AG04449 (cell line): ENCODE measurements at regions of chr19 and their contacts with region 1.

Region 1: GRCh38 chr19:5690125-5690954 is at the start of gene RPL36:
- DNase-seq: peak; percentile 57
- H3K4me3 ChIP-seq: peak within 1 kb of the TSS; percentile 98
- CTCF ChIP-seq: peak; percentile 99

Region 2: GRCh38 chr19:4776436-4777205 is 913.7 kb before region 1 on chr19:
- CTCF ChIA-PET with region 1: no interaction called
- POLR2A ChIA-PET with region 1: no interaction called
- DNase-seq: no peak
- H3K4me3 ChIP-seq: no peak overlapping the region
- CTCF ChIP-seq: no peak

Region 3: DNA sequence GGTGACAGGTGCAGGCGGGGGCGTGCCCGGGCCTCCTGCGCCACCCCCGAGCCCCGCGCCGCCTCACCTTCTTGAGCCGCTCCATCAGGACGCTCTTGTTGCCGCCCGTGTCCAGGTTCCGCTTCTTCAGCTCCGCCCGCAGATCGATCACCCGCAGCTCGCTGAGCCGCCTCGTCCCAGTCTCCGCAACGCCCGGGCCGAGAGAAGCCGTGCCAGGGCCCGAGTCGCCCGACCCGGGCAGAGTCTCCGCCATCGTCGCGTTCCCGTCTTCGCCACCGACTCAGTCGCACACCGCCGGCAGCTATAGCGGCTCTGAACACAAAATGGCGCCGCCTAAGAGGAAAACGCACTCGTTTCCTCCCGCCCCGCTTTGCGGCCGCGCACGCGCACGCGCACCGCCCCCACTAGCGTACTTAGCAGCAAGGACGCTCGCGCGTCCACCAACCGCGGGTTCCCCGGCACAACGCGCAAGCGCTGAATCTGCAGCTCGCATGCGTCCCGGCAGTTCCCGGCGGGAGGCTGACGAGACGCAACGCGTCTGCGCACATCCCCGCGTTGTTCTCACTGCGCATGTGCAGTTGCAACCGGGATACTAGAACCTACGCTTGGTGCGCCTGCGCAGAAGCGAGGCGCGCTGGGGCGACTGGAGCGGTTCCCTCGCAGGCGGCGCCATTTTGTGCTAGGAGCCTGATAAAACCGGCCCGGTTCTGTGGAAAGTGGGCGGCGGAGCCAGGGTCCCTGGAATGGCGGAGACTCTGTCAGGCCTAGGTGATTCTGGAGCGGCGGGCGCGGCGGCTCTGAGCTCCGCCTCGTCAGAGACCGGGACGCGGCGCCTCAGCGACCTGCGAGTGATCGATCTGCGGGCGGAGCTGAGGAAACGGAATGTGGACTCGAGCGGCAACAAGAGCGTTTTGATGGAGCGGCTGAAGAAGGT is 67.6 kb before region 1 on chr19 and contains the starts of genes SAFB and SAFB2:
- CTCF ChIA-PET with region 1: interaction called, 13 read pairs
- POLR2A ChIA-PET with region 1: interaction called, 7 read pairs
- DNase-seq: peak; percentile 95
- H3K4me3 ChIP-seq: peak within 1 kb of the TSS; percentile 96
- CTCF ChIP-seq: no peak

Region 4: GRCh38 chr19:5707576-5708575 is 17.5 kb after region 1 on chr19:
- CTCF ChIA-PET with region 1: interaction called, 58 read pairs
- POLR2A ChIA-PET with region 1: interaction called, 3 read pairs
- DNase-seq: no peak
- H3K4me3 ChIP-seq: no peak overlapping the region
- CTCF ChIP-seq: no peak

Region 5: GRCh38 chr19:5719274-5719960 is 29.1 kb after region 1 on chr19:
- CTCF ChIA-PET with region 1: interaction called, 58 read pairs
- POLR2A ChIA-PET with region 1: interaction called, 19 read pairs
- DNase-seq: no peak
- H3K4me3 ChIP-seq: peak overlapping the region; percentile 97
- CTCF ChIP-seq: no peak

Region 6: DNA sequence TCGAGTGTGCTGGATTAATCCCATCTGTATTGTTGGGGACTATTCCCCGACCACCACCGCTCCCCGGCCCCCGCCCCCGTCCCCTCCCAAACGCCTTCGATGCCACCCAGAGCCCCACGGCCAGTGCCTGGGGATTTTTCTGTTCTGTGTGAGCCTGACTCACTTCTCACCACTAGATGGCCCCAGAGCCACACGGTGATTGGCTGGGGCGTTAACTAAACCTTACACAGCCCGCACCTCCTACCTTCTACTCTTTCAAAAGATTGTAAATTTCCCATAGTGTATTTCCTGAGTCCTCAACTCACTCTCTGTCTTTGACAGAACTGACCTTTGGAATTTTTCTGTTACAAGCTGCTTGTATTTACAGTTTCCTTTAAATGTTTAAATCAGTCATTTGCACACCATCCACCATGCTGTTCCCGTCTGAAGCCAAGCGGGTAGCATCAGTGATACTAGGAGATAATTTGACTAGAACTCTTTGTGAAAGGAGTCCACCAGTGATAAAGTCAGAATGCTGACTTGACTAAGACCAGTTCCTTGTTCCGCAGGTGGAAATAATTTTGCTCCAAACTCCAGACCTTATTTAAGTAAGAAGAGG is 358.6 kb after region 1 on chr19:
- CTCF ChIA-PET with region 1: no interaction called
- POLR2A ChIA-PET with region 1: no interaction called
- DNase-seq: no peak
- H3K4me3 ChIP-seq: no peak overlapping the region
- CTCF ChIP-seq: peak; percentile 86